Lower leg skin (tissue), 4 donors: ENCODE measurements at regions of chr14 and their contacts with region 1.

Region 1: GRCh38 chr14:52808101-52808500 is 16.7 kb upstream of the GNPNAT1 start:
- DNase-seq: no peak
- H3K4me3 ChIP-seq: no peak overlapping the region
- CTCF ChIP-seq: no peak
- POLR2A ChIP-seq: no peak

Region 2: GRCh38 chr14:51258280-51258679 is 1549.8 kb before region 1 on chr14:
- intact Hi-C with region 1: loop called (anchors 5 kb)
- DNase-seq: no peak
- H3K4me3 ChIP-seq: no peak overlapping the region
- CTCF ChIP-seq: no peak
- POLR2A ChIP-seq: no peak

Region 3: DNA sequence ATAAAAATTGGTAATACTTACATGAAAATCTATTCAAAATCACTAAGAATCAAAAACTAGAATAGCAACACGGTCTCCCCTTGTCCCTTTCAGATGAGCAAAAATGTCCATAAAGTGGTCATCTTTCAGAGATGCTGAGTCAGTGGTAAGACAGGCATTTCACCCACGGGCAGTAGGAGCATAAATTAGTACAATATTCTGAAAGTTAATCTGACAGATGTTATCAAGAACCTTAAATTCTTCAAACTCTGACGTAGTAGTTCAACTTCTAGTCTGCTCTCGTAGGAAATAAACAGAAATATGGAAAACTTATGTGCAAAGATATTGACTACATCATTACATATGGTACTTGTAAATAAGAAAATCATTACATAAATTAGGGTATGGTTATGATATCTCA is 16.4 kb after region 1 on chr14:
- intact Hi-C with region 1: no loop called
- DNase-seq: no peak
- H3K4me3 ChIP-seq: no peak overlapping the region
- CTCF ChIP-seq: no peak
- POLR2A ChIP-seq: no peak